Heart left ventricle (tissue), 16 donors: ENCODE measurements at regions of chr5 and their contacts with region 1.

Region 1: GRCh38 chr5:121949867-121950266 is 11.9 kb upstream of the SRFBP1 start:
- DNase-seq: peak in 1 of 5 donors; percentile 14
- ATAC-seq: peak in 1 of 4 donors; percentile 39
- H3K4me3 ChIP-seq: no peak overlapping the region
- H3K27ac ChIP-seq: no peak overlapping the region
- H3K4me1 ChIP-seq: no peaks in the 10 kb centered on the region
- H3K27me3 ChIP-seq: no peaks in the 10 kb centered on the region
- CTCF ChIP-seq: peak in 11 of 12 donors; percentile 37 to 71 (median 55)
- POLR2A ChIP-seq: no peak

Region 2: DNA sequence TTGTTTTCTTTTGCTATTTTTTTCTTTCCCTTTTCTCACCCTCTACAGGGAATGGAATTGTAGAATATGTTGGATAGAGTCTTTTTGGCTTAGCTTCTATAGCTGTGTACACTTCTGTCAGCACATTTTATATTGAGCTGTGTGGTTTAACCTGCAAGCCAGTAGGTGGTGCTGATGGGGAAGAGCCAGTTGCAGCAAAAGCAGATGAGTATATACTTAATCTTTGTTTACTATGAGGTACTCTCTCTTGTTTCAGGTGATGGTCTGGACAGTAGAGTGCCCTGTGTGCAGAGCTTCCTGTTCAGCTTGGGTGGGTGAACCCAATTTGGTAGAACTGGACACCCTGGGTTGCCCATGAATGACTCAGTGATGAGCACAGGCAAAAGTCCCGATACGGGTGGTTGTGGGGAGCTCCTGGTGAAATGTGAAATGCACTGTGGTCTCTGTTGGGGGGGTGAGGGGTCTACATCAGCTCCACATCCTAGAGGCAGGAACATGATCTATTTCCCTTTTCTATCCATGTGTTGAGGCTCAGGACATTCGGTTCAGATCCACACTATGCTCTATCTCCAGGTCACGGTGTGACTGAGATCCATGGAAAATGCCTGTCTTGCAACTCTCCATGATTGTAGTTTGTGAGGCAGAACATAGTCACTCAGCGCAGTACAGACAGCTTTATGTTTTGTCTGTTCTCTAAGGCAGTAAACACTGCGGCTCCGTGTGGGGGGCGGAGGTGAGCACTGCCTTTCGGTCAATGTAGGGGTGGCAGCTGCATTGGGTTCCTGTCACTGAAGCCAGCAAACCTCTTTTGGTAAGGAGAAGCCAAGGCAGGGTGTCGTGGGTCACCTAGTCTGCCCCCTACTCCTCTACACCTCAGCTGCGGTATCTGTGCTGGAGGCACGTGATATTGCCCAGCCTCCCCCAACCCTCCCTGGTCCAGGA is 1132.6 kb before region 1 on chr5:
- intact Hi-C with region 1: loop called in 3 of 10 experiments (anchors 5 to 10 kb)
- DNase-seq: no peak
- ATAC-seq: peak in 2 of 4 donors; percentile 46 to 51
- H3K4me3 ChIP-seq: no peak overlapping the region
- H3K27ac ChIP-seq: no peak overlapping the region
- H3K4me1 ChIP-seq: no peaks in the 10 kb centered on the region
- H3K27me3 ChIP-seq: no peaks in the 10 kb centered on the region
- CTCF ChIP-seq: peak in 7 of 12 donors; percentile 11 to 47 (median 25)
- POLR2A ChIP-seq: no peak

Region 3: DNA sequence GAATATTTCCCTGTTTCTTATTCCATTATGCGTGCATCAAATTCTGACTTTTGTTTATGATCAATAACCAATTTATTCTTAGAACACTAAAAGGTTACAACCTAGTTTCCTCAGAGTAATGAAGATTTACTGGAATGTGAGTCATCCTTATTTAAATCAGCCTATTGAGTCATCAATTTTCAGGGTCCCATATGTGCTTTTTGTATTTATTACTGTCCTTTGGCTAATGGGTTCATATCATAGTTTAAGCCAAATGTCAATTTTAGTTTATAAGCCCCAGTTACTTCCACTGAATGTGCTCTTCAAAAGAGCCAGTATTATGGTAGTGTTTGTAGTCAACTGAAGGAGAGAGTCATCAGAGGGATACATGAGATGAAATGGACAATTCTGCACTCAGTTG is 1126.5 kb before region 1 on chr5:
- intact Hi-C with region 1: loop called in 3 of 10 experiments (anchors 5 to 10 kb)
- DNase-seq: no peak
- ATAC-seq: no peak
- H3K4me3 ChIP-seq: no peak overlapping the region
- H3K27ac ChIP-seq: no peak overlapping the region
- H3K4me1 ChIP-seq: no peaks in the 10 kb centered on the region
- H3K27me3 ChIP-seq: no peaks in the 10 kb centered on the region
- CTCF ChIP-seq: no peak
- POLR2A ChIP-seq: no peak

Region 4: DNA sequence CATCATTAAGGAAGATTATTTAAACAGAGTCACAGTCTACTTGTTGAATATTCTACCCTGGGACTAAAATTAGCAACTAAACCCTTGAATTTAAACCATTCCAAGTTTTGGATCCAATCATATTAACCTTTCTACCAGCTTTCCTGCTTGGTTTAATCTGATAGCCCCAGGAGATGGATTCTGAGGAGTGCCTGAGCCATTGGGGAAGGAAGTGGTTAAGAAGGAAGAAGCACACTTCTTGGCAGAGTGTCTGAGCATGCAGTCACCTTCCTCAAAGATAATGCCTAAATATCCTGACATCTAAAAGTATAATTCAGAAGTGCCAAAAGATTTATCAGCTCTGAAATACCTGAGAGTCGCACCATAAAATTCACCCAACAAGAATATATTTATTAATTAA is 288.0 kb after region 1 on chr5:
- intact Hi-C with region 1: no loop called
- DNase-seq: no peak
- ATAC-seq: no peak
- H3K4me3 ChIP-seq: no peak overlapping the region
- H3K27ac ChIP-seq: no peak overlapping the region
- H3K4me1 ChIP-seq: peaks cover 0 to 3% (median 0%) of the 10 kb centered on the region in 12 donors
- H3K27me3 ChIP-seq: no peaks in the 10 kb centered on the region
- CTCF ChIP-seq: no peak
- POLR2A ChIP-seq: no peak